ENCODE measurements at regions of chr14 and their contacts with region 1.

Region 1: DNA sequence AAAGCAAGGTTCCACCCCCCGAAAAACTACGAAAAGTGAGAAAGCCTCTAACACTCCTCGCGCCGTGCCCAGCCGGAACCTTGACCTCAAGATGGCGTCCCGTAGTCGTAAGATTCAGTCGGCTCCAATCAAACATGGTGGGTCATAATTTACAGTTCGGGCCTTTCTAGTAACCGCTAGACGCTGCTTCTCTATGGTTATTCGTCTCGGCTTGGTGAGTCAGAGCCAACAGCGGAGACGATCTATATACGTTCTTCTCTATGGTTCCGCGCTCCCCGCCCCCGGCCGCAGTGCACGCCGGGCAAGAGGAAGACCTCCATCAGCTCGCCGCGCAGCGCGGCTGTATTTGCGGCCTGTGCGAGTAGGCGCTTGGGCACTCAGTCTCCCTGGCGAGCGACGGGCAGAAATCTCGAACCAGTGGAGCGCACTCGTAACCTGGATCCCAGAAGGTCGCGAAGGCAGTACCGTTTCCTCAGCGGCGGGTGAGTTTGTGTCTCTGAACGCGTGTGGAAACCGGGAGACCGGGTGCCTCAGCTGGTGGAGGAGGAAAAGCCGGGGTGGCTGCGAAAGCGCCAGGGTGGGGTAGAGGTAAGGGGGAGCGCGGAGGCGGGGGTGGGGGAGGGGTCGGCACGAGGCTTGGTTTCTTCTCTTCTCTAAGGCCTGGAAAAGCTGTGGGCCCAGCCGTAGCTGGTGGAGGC is at the start of gene RBM25:
- DNase-seq: peak; percentile 99
- H3K4me3 Mint-ChIP-seq: no peak within 1 kb of the TSS
- H3K27ac Mint-ChIP-seq: no peak within 1 kb of the TSS
- H3K4me1 Mint-ChIP-seq: no peaks in the 10 kb centered on the region
- H3K27me3 Mint-ChIP-seq: no peaks in the 10 kb centered on the region
- CTCF ChIP-seq: no peak
- total RNA-seq, gene RBM25: 106 and 107 TPM in 2 replicates

Region 2: DNA sequence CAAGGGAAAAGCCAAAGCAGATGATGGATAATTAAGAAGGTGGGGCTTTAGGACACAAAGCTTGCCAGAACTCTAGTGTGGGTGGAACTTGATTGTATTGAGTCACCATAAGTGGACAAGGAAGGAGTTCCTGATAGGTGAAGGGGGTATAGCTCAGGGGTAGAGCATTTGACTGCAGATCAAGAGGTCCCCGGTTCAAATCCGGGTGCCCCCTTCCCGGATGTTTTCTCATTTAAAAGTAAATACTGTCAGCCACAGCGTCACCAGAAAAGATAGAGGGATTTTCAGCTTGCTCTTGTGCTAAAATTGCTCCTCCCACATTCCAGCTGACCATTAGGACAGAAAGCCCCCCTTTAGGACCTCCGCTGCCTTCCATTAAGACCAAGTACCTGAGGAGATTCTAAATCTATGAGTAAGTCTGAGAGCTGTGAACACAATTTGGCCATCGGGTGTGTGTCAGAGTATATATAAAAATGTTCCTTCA is 95.5 kb before region 1 on chr14:
- CTCF ChIA-PET with region 1: interaction called, 3 read pairs
- POLR2A ChIA-PET with region 1: interaction called, 23 read pairs
- intact Hi-C with region 1: loop called (anchors 1 kb)
- DNase-seq: peak; percentile 89
- H3K4me3 Mint-ChIP-seq: peak overlapping the region; percentile 17
- H3K27ac Mint-ChIP-seq: peak overlapping the region; percentile 88
- H3K4me1 Mint-ChIP-seq: peaks cover 34% of the 10 kb centered on the region
- H3K27me3 Mint-ChIP-seq: no peaks in the 10 kb centered on the region
- CTCF ChIP-seq: no peak

Region 3: GRCh38 chr14:73026845-73027542 is 31.4 kb before region 1 on chr14 and contains the start of gene ZFYVE1:
- CTCF ChIA-PET with region 1: no interaction called
- POLR2A ChIA-PET with region 1: interaction called, 139 read pairs
- intact Hi-C with region 1: loop called (anchors 1 kb)
- DNase-seq: peak; percentile 99
- H3K4me3 Mint-ChIP-seq: peak within 1 kb of the TSS; percentile 96
- H3K27ac Mint-ChIP-seq: peak within 1 kb of the TSS; percentile 98
- H3K4me1 Mint-ChIP-seq: peaks cover 19% of the 10 kb centered on the region
- H3K27me3 Mint-ChIP-seq: no peaks in the 10 kb centered on the region
- CTCF ChIP-seq: no peak
- total RNA-seq, gene ZFYVE1: 13.3 and 17.6 TPM in 2 replicates

Region 4: DNA sequence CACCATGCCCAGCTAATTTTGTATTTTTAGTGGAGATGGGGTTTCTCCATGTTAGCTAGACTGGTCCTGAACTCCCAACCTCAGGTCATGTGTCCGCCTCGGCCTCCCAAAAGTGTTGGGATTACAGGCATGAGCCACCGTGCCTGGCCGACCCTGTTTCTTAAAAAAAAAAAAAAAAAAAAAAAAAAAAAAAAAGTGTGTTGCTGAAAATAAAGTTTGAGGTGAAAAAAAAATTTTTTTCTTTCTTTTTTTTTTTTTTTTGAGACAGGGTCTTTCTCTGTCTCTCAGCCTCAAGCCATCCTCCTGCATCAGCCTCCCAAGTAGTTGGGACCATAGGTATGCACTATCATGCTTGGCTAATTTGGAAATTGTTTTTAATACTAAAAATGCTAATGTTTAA is 11.2 kb after region 1 on chr14:
- CTCF ChIA-PET with region 1: interaction called, 3 read pairs
- POLR2A ChIA-PET with region 1: interaction called, 38 read pairs
- intact Hi-C with region 1: loop called (anchors 1 kb)
- DNase-seq: no peak
- H3K4me3 Mint-ChIP-seq: no peak overlapping the region
- H3K27ac Mint-ChIP-seq: no peak overlapping the region
- H3K4me1 Mint-ChIP-seq: peaks cover 6% of the 10 kb centered on the region
- H3K27me3 Mint-ChIP-seq: no peaks in the 10 kb centered on the region
- CTCF ChIP-seq: no peak

Region 5: GRCh38 chr14:73136387-73137225 is 78.2 kb after region 1 on chr14 and contains the start of gene PSEN1:
- CTCF ChIA-PET with region 1: no interaction called
- POLR2A ChIA-PET with region 1: interaction called, 37 read pairs
- intact Hi-C with region 1: no loop called
- DNase-seq: peak; percentile 94
- H3K4me3 Mint-ChIP-seq: peak within 1 kb of the TSS; percentile 74
- H3K27ac Mint-ChIP-seq: peak within 1 kb of the TSS; percentile 99
- H3K4me1 Mint-ChIP-seq: peaks cover 9% of the 10 kb centered on the region
- H3K27me3 Mint-ChIP-seq: no peaks in the 10 kb centered on the region
- CTCF ChIP-seq: no peak
- total RNA-seq, gene PSEN1: 55.1 and 64.5 TPM in 2 replicates

Measured in MCF 10A (cell line).